Dorsolateral prefrontal cortex (tissue), 120 donors: ENCODE measurements at regions of chr12 and their contacts with region 1.

Region 1: DNA sequence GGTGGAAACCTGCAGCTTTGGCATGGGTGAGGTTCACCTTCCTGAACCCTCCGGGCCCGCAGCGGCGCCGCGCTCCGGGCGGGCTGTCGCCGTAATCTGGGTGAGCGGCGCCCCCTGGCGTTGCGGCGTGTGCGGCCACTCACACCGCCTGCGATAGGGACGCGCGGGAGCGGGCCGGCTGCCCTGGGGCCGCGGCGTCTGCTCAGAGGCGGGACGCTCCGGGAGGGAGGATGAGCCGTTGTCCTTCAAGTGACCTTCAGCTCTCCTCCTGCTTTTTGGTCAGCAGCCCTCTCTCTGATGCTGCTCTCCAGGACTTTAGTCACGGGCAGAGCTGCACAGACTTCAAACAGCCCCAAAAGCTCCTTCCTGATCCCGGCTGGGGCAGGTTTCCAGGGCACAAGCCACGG is 211.7 kb upstream of the FKBP4 start:
- DNase-seq: peak in 9 of 10 donors; percentile 38 to 77 (median 55)
- H3K4me3 ChIP-seq: peak overlapping the region in 45 of 59 donors; percentile 3 to 54 (median 33)
- H3K27ac ChIP-seq: peak overlapping the region in 11 of 59 donors; percentile 6 to 75 (median 40)
- H3K27me3 ChIP-seq: no peaks in the 10 kb centered on the region
- CTCF ChIP-seq: peak; percentile 52 to 92 (median 85)

Region 2: DNA sequence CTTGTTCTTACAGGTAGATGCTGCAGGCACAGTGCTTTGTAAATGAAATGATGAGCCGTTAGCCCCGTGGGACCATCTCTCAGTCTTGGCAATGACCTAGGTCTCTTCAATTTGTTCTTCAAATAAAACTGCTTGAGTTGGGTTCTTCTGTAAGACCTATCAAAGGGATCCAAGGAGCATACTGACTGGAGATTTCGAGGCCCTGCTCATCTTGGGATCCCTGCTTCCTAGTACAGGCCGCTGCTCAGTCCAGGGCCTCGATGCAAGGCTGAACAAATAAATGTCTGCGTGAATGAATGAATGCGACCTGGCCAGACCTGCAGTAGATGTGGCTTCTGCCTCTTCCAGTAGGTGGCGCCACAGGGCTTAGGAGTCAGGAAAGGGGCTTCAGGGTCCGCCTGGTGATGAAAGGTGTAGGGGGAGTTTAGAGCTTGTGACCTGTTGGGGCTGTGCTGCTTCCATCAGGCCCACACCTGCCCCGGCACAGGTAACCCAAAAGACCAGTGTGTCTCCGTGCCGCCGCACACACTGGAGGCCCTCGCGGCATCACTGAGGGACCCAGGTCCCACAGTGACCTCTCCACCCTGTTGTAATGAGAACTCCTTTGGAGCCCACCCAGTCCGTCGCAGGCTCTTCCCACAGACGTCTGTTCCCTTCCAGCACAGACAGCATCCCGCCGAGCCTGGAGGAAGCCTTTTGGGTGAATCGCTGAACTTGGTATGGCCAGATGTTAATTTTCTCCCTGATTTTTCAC is 525.9 kb before region 1 on chr12:
- intact Hi-C with region 1: loop called in 1 of 2 experiments (anchors 5 kb)
- DNase-seq: peak in 8 of 10 donors; percentile 45 to 69 (median 63)
- H3K4me3 ChIP-seq: peak overlapping the region in 50 of 59 donors; percentile 2 to 85 (median 41)
- H3K27ac ChIP-seq: peak overlapping the region in 17 of 59 donors; percentile 0 to 65 (median 32)
- H3K27me3 ChIP-seq: no peaks in the 10 kb centered on the region
- CTCF ChIP-seq: peak; percentile 25 to 82 (median 69)

Region 3: GRCh38 chr12:2291182-2291832 is 291.8 kb before region 1 on chr12:
- intact Hi-C with region 1: loop called in 1 of 2 experiments (anchors 10 kb)
- DNase-seq: no peak
- H3K4me3 ChIP-seq: no peak overlapping the region
- H3K27ac ChIP-seq: no peak overlapping the region
- H3K27me3 ChIP-seq: no peaks in the 10 kb centered on the region
- CTCF ChIP-seq: peak; percentile 33 to 80 (median 70)

Region 4: DNA sequence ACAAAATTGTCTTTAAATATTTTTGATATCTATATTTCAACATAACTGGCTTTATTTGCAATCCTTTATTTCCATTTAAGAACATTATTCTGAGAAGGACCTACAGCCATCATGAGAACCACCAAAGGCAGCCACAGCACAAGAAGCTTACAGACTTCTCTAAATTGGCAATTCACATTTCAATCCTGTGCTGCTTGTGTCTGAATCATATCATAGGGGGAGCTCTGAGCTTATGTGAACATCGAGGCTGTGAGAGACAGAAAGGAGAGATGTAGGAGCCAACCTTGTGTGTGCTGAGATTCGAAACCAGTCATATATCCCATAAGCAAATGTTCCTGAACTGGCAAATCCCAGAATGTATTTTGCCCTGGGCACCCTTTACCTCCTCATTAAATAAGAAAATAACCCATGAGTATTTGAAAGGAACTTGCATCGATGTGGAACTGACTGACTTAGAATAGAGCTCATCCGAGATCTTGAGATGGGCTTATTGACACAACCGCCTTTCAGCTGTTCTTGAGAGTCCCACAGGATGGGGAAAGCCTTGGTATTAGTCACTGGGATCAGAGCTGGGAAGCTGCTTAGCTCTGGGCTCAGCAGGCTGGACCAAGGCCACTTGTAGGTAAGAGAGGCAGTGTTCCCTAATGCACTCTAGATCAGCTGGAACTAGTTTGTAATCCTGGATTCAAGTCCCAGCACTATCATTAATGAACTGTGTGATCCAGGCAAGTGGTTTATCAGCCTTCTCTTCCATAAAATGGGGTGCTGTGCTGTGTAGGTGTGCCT is 200.5 kb before region 1 on chr12:
- intact Hi-C with region 1: loop called in 1 of 2 experiments (anchors 5 kb)
- DNase-seq: no peak
- H3K4me3 ChIP-seq: no peak overlapping the region
- H3K27ac ChIP-seq: peak overlapping the region in 8 of 59 donors; percentile 9 to 37 (median 26)
- H3K27me3 ChIP-seq: no peaks in the 10 kb centered on the region
- CTCF ChIP-seq: peak in 14 of 56 donors; percentile 9 to 35 (median 22)